PC-9 (cell line): ENCODE measurements at regions of chr9 and their contacts with region 1.

Region 1: DNA sequence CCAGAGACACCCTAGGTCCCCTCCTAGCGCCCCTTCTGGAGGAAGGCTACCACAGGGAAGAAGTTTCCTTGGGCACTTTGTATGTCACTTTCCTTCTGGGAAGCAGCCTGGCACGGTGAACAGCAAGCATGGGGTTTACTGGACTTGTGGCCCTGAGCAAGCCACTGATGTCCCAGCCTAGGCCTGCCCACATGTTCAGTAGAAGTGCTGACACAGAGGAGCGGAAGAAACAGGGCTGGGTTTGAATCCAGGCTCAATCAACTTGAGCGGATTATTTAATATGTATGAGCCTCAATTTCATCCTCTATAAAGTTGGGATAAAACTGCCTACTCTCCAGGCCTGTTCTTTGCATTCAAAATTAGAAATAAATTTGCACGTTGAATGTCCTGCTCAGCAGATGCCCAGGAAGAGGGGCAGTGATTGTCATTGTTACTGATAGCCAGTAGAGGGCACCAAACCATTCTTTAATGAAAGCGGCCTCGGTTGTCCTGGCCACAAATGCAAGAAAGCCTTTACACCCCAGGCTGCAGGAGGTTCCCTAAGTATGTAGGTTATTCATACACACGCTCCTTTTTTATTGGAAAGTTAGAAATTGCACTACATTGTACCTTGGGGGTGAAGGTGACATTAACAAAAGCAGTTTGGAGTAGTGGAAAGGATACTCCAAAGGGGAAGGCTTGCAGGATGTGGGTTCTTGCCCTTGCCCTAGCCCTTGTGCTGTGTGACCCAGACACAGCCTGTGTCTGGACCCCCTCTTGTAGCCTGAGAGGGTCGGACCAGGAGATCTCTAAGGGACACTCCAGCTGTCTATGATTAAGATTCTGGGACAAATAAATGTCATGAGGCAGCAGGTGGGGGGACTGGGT is 13.4 kb upstream of the XPA start:
- DNase-seq: peak; percentile 59
- H3K4me3 ChIP-seq: no peak overlapping the region
- H3K27ac ChIP-seq: no peak overlapping the region
- H3K4me1 ChIP-seq: peaks cover 43% of the 10 kb centered on the region
- H3K27me3 ChIP-seq: no peaks in the 10 kb centered on the region
- CTCF ChIP-seq: peak; percentile 90

Region 2: DNA sequence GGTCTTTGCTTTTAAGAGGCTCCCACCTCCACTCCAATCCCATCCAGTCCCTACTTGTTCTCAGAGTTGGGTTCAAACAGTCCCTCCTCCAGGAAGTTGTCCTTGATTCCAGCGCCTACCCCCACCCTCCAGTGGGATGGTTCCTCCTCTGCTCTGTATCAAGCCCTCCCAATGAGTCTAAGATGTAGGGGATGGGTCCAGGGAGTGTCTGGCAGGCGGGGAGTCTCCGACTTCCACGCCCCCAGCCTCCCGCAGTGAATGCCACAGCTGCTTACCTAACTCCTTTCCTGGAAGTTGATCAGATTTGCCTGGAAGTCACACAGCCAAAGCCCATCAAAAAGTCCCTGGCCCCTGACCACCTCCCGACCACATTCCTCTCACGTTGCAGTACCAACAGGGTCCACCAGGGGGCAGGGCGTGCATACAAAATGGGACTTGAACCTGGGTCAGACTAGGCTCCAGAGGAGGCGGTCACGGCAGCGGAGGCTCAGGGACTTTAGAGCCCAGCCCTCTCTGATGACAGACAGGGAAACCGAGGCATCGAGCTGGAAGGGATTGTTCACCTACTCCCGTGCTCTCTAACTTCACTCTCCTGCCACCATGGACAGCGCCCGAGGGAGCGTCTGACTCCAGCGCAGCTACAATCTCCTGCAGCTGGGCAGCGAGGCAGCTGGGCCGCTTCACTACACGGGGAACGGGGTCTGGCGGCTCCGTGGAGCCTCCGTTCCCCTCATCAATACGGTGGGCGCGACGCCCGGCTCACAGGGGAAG is 323.7 kb before region 1 on chr9:
- CTCF ChIA-PET with region 1: no interaction called
- POLR2A ChIA-PET with region 1: no interaction called
- intact Hi-C with region 1: no loop called
- DNase-seq: peak in 1 of 2 experiments; percentile 71
- H3K4me3 ChIP-seq: no peak overlapping the region
- H3K27ac ChIP-seq: no peak overlapping the region
- H3K4me1 ChIP-seq: no peaks in the 10 kb centered on the region
- H3K27me3 ChIP-seq: no peaks in the 10 kb centered on the region
- CTCF ChIP-seq: peak; percentile 99

Region 3: DNA sequence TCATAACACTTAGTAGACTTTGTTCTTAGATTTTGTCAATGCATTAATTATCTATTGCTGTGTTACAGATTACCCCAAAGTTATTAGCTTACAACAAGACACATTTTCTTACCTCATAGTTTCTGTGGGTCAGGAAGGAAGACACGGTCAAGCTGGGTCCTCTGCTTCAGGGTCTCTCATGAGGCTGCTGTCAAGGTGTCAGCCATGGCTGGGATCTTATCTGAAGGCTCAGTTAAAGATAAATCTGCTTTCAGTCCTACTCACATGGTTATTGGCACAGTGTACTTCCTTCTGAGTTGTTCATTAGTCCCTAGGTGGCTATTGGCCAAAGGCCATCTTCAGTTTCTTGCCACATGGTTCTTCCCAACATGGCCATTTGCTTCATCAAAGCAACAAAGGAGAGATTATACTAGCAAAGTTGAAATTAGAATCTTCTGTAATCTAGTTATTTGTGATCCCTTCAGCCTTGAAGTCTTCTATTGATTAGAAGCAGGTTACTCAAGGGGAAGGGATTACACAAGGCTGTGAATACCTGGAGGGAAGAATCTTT is 273.5 kb before region 1 on chr9:
- CTCF ChIA-PET with region 1: no interaction called
- POLR2A ChIA-PET with region 1: no interaction called
- intact Hi-C with region 1: no loop called
- DNase-seq: no peak
- H3K4me3 ChIP-seq: no peak overlapping the region
- H3K27ac ChIP-seq: no peak overlapping the region
- H3K4me1 ChIP-seq: peaks cover 13% of the 10 kb centered on the region
- H3K27me3 ChIP-seq: no peaks in the 10 kb centered on the region
- CTCF ChIP-seq: no peak

Region 4: DNA sequence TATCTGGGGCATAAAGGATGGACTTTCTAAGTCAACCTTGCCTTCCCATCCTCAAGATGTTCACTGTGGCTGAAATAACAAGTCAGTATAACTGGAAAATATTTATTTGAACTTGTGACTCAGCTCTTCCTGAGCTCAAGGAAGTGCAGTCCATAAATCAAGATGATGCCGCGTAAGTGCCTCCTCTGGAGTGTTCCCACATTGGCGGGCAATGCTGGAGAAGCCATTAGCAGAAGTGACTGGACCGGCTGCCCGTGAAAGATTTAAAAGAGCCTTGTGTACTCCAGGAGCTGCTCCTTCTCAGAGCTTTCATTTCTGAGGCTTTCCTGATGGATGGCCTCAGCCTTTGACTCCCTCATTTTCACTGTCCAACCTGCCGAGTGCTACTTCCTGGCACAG is 191.7 kb before region 1 on chr9:
- CTCF ChIA-PET with region 1: no interaction called
- POLR2A ChIA-PET with region 1: no interaction called
- intact Hi-C with region 1: no loop called
- DNase-seq: peak; percentile 71 to 95
- H3K4me3 ChIP-seq: no peak overlapping the region; the same call in 1 of the 2 replicates
- H3K27ac ChIP-seq: peak overlapping the region; percentile 68
- H3K4me1 ChIP-seq: peaks cover 24% of the 10 kb centered on the region
- H3K27me3 ChIP-seq: no peaks in the 10 kb centered on the region
- CTCF ChIP-seq: no peak

Region 5: DNA sequence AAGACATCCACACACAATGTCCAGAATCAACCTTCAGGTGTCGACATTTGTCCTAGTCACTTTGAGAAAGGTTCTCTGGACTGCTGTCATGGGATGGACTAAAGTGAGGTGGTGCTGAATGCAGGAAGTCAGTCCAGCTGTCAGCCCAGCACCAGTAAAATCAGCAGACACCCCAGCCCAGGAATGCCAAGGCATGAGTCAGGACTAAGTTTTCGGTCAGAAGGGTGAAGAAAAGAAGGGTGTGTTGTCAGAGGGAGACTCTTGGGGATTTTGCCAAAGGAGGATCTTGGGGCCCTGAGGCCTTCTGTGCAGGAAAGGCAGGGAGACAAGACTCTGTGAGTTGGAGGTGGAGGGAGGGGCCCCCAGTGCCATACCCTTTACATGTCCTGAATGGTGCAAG is 55.5 kb after region 1 on chr9:
- CTCF ChIA-PET with region 1: no interaction called
- POLR2A ChIA-PET with region 1: no interaction called
- intact Hi-C with region 1: loop called (anchors 2 kb)
- DNase-seq: peak; percentile 32 to 51
- H3K4me3 ChIP-seq: no peak overlapping the region
- H3K27ac ChIP-seq: no peak overlapping the region
- H3K4me1 ChIP-seq: peaks cover 11% of the 10 kb centered on the region; the same call in 1 of the 2 replicates
- H3K27me3 ChIP-seq: no peaks in the 10 kb centered on the region
- CTCF ChIP-seq: no peak

Region 6: GRCh38 chr9:97803167-97804058 is 92.8 kb after region 1 on chr9:
- CTCF ChIA-PET with region 1: no interaction called
- POLR2A ChIA-PET with region 1: interaction called, 14 read pairs
- intact Hi-C with region 1: loop called (anchors 1 kb)
- DNase-seq: peak; percentile 63 to 86
- H3K4me3 ChIP-seq: peak overlapping the region; percentile 64
- H3K27ac ChIP-seq: peak overlapping the region; percentile 85
- H3K4me1 ChIP-seq: peaks cover 64% of the 10 kb centered on the region
- H3K27me3 ChIP-seq: no peaks in the 10 kb centered on the region
- CTCF ChIP-seq: no peak

Region 7: DNA sequence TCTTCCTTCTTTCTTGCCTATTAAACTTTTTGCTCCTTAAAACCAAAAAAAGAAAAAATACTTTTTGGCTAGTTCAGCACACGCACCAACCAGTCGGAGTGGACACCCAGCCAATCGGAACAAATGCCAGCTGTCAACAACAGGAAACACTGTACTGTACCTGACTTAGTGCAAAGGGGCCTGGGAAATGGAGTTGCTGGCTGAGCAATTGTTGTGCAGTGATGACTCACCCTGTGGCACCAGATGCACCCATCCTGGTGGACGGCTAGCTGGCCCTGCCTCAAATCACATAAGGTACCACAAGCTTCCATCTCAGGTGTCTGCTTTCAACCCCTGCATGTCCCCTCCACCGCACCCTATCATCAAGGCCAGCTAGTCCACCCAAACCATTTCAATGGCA is 163.3 kb after region 1 on chr9:
- CTCF ChIA-PET with region 1: interaction called, 4 read pairs
- POLR2A ChIA-PET with region 1: no interaction called
- intact Hi-C with region 1: loop called (anchors 1 kb)
- DNase-seq: peak; percentile 60 to 69
- H3K4me3 ChIP-seq: no peak overlapping the region
- H3K27ac ChIP-seq: peak overlapping the region; percentile 13; the same call in 1 of the 2 replicates
- H3K4me1 ChIP-seq: peaks cover 28% of the 10 kb centered on the region
- H3K27me3 ChIP-seq: no peaks in the 10 kb centered on the region
- CTCF ChIP-seq: no peak

Region 8: GRCh38 chr9:97982683-97983588 is 272.3 kb after region 1 on chr9 and contains the start of gene ANP32B:
- CTCF ChIA-PET with region 1: no interaction called
- POLR2A ChIA-PET with region 1: no interaction called
- intact Hi-C with region 1: loop called (anchors 5 kb)
- DNase-seq: peak; percentile 67 to 96
- H3K4me3 ChIP-seq: peak within 1 kb of the TSS; percentile 92
- H3K27ac ChIP-seq: peak within 1 kb of the TSS; percentile 93
- H3K4me1 ChIP-seq: peaks cover 37% of the 10 kb centered on the region
- H3K27me3 ChIP-seq: no peaks in the 10 kb centered on the region
- CTCF ChIP-seq: peak; percentile 56; the same call in 1 of the 2 replicates
- total RNA-seq, gene ANP32B: 280 and 284 TPM in 2 replicates

Region 9: DNA sequence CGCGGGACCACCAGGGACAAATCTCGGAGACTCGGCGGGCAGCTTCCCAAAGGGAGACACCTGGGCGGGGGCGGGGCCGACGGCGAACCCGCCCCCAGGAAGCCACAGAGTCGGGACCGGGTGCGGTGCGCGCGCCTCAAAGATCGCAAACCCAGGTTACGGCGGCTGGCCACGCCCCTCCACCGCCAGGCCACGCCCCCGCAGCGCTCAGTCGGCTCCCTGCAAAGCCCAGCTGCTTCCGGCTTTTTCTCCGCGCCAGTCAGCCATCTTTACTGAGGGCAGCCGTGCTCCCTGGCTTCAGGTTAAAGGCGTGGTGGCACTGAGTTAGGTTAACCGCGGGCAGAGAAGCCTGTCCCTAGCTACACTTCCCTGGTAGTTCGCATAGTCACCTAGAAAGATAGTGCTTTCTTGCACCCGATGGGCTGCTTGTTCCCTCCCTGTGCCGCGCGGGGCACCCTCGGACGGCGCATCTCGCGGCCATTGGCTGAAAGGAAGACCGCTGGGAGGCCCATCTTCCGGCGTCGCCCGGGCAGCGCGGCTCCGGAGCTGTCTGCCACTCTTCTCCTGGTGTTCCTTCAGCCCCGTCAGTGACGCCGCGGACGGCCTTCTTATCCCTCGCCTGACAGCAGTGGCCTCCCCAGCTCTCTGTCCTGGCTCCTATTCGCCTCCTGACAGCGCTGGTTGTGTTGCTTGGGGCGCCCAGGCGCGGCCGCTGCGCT is 545.1 kb after region 1 on chr9 and contains the start of gene TBC1D2:
- CTCF ChIA-PET with region 1: no interaction called
- POLR2A ChIA-PET with region 1: no interaction called
- intact Hi-C with region 1: loop called (anchors 10 kb)
- DNase-seq: peak; percentile 85 to 99
- H3K4me3 ChIP-seq: peak within 1 kb of the TSS; percentile 76
- H3K27ac ChIP-seq: peak within 1 kb of the TSS; percentile 82
- H3K4me1 ChIP-seq: peaks cover 49% of the 10 kb centered on the region
- H3K27me3 ChIP-seq: no peaks in the 10 kb centered on the region
- CTCF ChIP-seq: 0 out of 2 replicates have a peak, but pooled peaks have one; percentile 21
- total RNA-seq, gene TBC1D2: 42.9 and 44.7 TPM in 2 replicates